OCI-LY7 (cell line): ENCODE measurements at regions of chr15 and their contacts with region 1.

Region 1: GRCh38 chr15:59662260-59662659 is 4.9 kb upstream of the GTF2A2 start:
- DNase-seq: no peak
- H3K4me3 ChIP-seq: no peak overlapping the region
- H3K27ac ChIP-seq: no peak overlapping the region
- H3K4me1 ChIP-seq: peaks cover 3% of the 10 kb centered on the region
- CTCF ChIP-seq: no peak

Region 2: DNA sequence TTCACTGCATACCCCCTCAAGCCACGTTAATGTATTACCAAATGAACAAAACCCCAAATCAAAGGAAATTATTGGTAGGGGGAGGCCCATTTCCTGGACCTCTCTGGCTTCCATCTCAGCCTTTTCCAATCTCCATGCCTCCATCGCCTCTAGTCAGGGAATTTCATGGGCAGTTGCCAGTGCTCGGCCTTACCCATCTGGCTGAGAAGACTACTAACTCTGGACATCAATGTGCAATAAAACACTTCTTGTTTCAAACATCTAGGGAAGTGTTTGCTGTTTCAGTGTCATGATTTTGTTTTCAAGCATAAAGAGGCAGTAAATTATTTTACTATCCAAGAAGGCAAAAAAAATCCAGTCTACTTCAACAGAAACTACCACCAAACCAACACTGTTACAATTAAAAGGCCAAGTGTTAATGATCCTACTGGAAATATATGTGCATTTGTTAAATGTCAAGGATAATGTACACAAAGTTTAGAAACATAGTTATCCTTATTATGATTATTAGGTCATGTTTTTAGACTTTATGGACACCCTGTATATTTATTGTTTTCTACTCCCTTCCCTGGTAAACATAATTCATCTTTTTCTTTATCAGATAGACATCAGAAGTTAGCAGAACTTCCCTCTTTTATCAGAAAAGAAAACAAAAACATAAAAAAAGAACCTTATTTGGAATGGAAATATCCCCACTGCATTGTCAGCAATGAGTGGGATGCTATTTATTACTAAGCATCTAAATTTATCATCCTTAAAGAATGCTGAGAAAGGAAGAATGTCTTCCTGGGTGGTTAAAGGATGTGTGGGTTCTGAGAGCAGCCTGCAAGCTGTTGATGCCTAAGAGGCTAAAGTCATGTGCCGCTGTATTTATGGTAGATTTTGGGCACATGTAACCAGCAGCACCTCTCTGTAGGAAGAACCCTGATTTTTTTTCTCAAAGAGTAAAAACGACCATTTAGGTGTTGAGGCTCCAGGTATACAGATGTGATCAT is 440.5 kb before region 1 on chr15:
- CTCF ChIA-PET with region 1: no interaction called
- POLR2A ChIA-PET with region 1: no interaction called
- intact Hi-C with region 1: no loop called
- DNase-seq: no peak
- H3K4me3 ChIP-seq: no peak overlapping the region
- H3K27ac ChIP-seq: no peak overlapping the region
- H3K4me1 ChIP-seq: no peaks in the 10 kb centered on the region
- CTCF ChIP-seq: no peak

Region 3: DNA sequence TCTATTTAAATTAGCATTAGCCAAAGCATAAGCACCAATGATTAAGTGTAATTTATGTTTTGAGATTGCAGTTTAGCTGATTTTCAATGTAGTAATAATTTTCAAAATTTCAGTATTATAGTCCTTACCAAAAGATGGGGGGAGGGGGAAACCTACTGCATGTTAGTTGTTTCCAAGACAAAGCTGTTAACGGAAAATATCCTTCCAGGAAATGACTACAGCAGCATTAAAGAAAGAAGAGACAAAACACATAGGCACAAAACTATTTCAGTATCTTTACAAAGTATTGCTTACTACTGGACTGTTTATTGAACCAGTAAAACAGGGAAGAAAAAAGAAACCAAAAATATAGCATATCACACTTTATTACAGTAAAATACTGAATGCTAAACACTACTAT is 16.4 kb after region 1 on chr15:
- CTCF ChIA-PET with region 1: no interaction called
- POLR2A ChIA-PET with region 1: interaction called, 8 read pairs
- intact Hi-C with region 1: loop called (anchors 2 kb)
- DNase-seq: no peak
- H3K4me3 ChIP-seq: no peak overlapping the region
- H3K27ac ChIP-seq: no peak overlapping the region
- H3K4me1 ChIP-seq: no peaks in the 10 kb centered on the region
- CTCF ChIP-seq: no peak